HepG2 (cell line): ENCODE measurements at regions of chr15 and their contacts with region 1.

Region 1: DNA sequence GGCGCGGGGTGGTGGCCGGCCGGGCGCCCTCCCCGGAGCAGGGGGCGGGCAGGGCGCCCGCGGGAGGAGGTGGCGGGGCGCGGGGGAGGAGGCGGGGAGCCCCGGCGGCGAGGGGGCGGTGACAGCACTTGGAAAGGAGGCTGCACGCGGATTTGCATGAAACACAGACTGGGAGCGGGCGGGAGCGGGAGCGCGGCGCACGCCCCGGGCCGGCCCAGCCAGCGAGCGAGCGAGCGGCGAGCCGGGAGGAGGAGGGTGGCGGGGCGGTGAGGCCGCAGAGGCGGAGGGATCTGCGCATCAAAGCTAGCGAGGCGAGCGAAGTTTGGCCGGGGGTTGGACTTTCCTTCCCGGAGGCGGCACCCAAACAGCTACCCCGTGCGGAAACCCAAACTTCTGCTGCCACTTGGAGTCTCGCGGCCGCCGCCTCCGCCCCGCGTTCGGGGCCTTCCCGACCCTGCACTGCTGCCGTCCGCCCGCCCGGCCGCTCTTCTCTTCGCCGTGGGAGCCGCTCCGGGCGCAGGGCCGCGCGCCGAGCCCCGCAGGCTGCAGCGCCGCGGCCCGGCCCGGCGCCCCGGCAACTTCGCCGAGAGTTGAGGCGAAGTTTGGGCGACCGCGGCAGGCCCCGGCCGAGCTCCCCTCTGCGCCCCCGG is at the start of gene SMAD3:
- DNase-seq: peak; percentile 86
- ATAC-seq: peak; percentile 67
- H3K4me3 ChIP-seq: peak within 1 kb of the TSS; percentile 78 to 98 (median 92)
- H3K27ac ChIP-seq: peak within 1 kb of the TSS; percentile 94
- H3K4me1 ChIP-seq: peaks cover 64% of the 10 kb centered on the region
- H3K27me3 ChIP-seq: no peaks in the 10 kb centered on the region; a peak in 1 of 5 replicates
- CTCF ChIP-seq: no peak
- EP300 ChIP-seq: no peak; a peak in 1 of 4 replicates
- POLR2A ChIP-seq: peak; percentile 78 to 82
- RAD21 ChIP-seq: peak; percentile 61
- total RNA-seq, gene SMAD3: 8.6 and 10.0 TPM in 2 replicates

Region 2: GRCh38 chr15:67024314-67024997 is 41.1 kb before region 1 on chr15:
- CTCF ChIA-PET with region 1: no interaction called
- POLR2A ChIA-PET with region 1: interaction called, 18 read pairs
- in situ Hi-C with region 1: no loop called
- intact Hi-C with region 1: no loop called
- DNase-seq: peak; percentile 77
- ATAC-seq: peak; percentile 84
- H3K4me3 ChIP-seq: no peak overlapping the region
- H3K27ac ChIP-seq: peak overlapping the region; percentile 22
- H3K4me1 ChIP-seq: peaks cover 37% of the 10 kb centered on the region
- H3K27me3 ChIP-seq: no peaks in the 10 kb centered on the region
- CTCF ChIP-seq: no peak
- EP300 ChIP-seq: no peak
- POLR2A ChIP-seq: no peak
- RAD21 ChIP-seq: 0 out of 2 replicates have a peak, but pooled peaks have one; percentile 15

Region 3: GRCh38 chr15:67048281-67049279 is 17.0 kb before region 1 on chr15:
- CTCF ChIA-PET with region 1: no interaction called
- POLR2A ChIA-PET with region 1: interaction called, 248 read pairs
- in situ Hi-C with region 1: no loop called
- intact Hi-C with region 1: loop called (anchors 1 kb)
- DNase-seq: peak; percentile 97
- ATAC-seq: peak; percentile 91
- H3K4me3 ChIP-seq: peak overlapping the region; percentile 6 to 56 (median 36); a peak in 5 of 6 replicates
- H3K27ac ChIP-seq: peak overlapping the region; percentile 100
- H3K4me1 ChIP-seq: peaks cover 6% of the 10 kb centered on the region
- H3K27me3 ChIP-seq: no peaks in the 10 kb centered on the region
- CTCF ChIP-seq: no peak
- EP300 ChIP-seq: peak; percentile 77 to 86
- POLR2A ChIP-seq: peak in 1 of 2 experiments; percentile 88; a peak in 2 of 4 replicates
- RAD21 ChIP-seq: peak; percentile 23; the same call in 1 of the 2 replicates

Region 4: GRCh38 chr15:67097930-67098740 is 32.6 kb after region 1 on chr15:
- CTCF ChIA-PET with region 1: no interaction called
- POLR2A ChIA-PET with region 1: interaction called, 10 read pairs
- in situ Hi-C with region 1: no loop called
- intact Hi-C with region 1: no loop called
- DNase-seq: no peak
- ATAC-seq: peak; percentile 53
- H3K4me3 ChIP-seq: peak overlapping the region in 1 of 3 experiments; percentile 39; a peak in 1 of 6 replicates
- H3K27ac ChIP-seq: peak overlapping the region; percentile 78
- H3K4me1 ChIP-seq: peaks cover 66% of the 10 kb centered on the region
- H3K27me3 ChIP-seq: no peaks in the 10 kb centered on the region
- CTCF ChIP-seq: no peak
- EP300 ChIP-seq: no peak
- POLR2A ChIP-seq: no peak
- RAD21 ChIP-seq: no peak

Region 5: DNA sequence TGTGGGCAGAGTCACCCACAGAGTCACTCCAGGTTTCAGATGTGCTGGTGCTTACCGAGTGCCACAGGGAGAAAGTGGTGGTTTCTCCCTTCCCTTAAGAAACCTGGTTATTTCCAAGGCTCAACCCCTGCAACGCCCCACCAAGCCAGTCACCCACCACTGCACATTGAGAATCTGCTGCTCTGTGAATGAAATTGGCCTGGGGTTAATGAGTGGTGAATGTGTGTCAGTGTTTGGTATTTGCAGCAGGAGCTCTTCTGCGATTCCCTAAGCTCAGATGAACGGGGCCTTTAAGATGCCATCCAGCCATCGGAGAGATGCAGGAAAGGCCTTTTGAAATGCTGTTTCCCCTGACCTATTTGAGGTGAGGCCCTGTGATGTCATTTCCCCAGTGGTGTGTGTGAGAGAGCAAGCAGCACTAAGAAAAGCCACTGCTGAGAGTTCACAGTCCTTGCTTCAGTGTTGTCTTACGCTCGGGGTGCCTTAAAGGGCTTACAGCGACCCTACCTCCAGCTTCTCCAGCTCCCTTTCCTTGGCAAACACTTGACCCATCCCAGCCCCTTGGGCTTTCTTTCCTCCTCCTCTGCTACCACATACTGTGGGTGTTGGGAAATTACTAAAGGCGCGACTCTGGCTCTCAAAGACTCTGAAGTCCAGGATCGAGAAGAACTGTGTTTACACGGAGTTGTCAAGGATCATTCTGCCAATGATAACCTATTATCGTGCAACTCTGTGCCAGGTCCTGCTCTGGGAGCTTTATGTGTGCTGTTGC is 68.7 kb after region 1 on chr15:
- CTCF ChIA-PET with region 1: no interaction called
- POLR2A ChIA-PET with region 1: interaction called, 17 read pairs
- in situ Hi-C with region 1: loop called (anchors 5 kb)
- intact Hi-C with region 1: no loop called
- DNase-seq: no peak
- ATAC-seq: peak; percentile 55
- H3K4me3 ChIP-seq: peak overlapping the region in 1 of 3 experiments; percentile 18; a peak in 1 of 6 replicates
- H3K27ac ChIP-seq: peak overlapping the region; percentile 60
- H3K4me1 ChIP-seq: peaks cover 81% of the 10 kb centered on the region
- H3K27me3 ChIP-seq: no peaks in the 10 kb centered on the region
- CTCF ChIP-seq: no peak
- EP300 ChIP-seq: no peak
- POLR2A ChIP-seq: no peak
- RAD21 ChIP-seq: no peak

Region 6: DNA sequence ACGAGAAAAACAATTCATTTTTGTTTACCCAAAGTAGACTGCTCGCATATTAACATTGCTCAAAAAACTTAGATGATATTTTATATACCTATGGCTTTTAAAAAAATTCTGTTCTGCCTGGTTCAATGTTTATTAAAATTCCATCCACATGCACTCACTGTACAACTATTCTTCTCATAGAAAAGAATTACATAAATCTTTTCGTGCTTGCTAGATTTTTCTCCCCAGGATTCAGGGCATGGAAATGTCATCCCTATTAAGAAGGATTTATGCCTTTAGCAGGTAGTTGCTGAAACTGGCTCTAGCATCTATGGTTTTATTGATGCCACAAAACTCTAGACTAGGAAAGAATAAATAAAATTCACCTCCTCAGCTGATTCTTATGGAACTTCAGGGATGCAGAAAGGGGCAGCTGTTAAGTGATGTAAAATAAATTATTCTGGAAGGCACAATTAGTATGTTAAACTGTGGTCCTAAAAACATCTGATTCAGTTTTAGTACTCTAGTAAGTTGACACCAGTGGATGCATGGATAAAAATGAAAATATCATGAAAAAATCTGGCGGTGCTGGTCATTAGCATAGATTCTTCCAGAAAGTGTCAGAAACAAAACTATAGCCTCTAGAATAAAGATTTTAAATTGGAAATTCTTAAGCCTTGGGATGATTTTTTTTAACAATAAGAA is 147.3 kb after region 1 on chr15:
- CTCF ChIA-PET with region 1: no interaction called
- POLR2A ChIA-PET with region 1: no interaction called
- in situ Hi-C with region 1: no loop called
- intact Hi-C with region 1: no loop called
- DNase-seq: no peak
- ATAC-seq: no peak
- H3K4me3 ChIP-seq: no peak overlapping the region
- H3K27ac ChIP-seq: no peak overlapping the region
- H3K4me1 ChIP-seq: no peaks in the 10 kb centered on the region
- H3K27me3 ChIP-seq: no peaks in the 10 kb centered on the region
- CTCF ChIP-seq: no peak
- EP300 ChIP-seq: no peak
- POLR2A ChIP-seq: no peak
- RAD21 ChIP-seq: no peak

Region 7: GRCh38 chr15:67254238-67255175 is 188.9 kb after region 1 on chr15 and contains the starts of genes AAGAB and IQCH:
- CTCF ChIA-PET with region 1: no interaction called
- POLR2A ChIA-PET with region 1: interaction called, 4 read pairs
- in situ Hi-C with region 1: no loop called
- intact Hi-C with region 1: loop called (anchors 2 kb)
- DNase-seq: peak; percentile 88
- ATAC-seq: peak; percentile 98
- H3K4me3 ChIP-seq: peak within 1 kb of the TSS; percentile 88 to 98 (median 92)
- H3K27ac ChIP-seq: peak within 1 kb of the TSS; percentile 65
- H3K4me1 ChIP-seq: peaks cover 31% of the 10 kb centered on the region
- H3K27me3 ChIP-seq: no peaks in the 10 kb centered on the region; a peak in 1 of 5 replicates
- CTCF ChIP-seq: no peak
- EP300 ChIP-seq: no peak
- POLR2A ChIP-seq: peak; percentile 74 to 86
- RAD21 ChIP-seq: no peak
- total RNA-seq, gene AAGAB: 34.9 and 52.3 TPM in 2 replicates
- total RNA-seq, gene IQCH: 0.48 and 0.55 TPM in 2 replicates

Region 8: DNA sequence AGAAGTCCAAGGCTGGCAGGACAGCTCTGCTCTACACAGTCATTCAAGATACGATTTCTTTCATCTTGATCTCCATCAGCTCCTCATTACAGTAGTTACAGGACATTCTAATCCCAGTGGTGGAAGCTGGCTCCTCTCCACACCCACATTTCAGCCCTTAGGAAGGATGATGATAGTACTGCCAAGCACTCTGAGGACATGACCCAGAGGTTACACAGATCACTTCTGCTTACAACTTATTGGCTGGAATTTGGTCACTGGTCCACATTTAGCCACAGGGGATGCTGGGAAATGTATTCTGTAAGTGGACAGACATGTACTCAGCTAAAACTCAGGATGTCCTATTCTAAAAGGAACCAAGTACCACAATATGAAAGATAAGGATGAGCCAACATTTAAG is 266.1 kb after region 1 on chr15:
- CTCF ChIA-PET with region 1: no interaction called
- POLR2A ChIA-PET with region 1: no interaction called
- in situ Hi-C with region 1: no loop called
- intact Hi-C with region 1: no loop called
- DNase-seq: no peak
- ATAC-seq: no peak
- H3K4me3 ChIP-seq: no peak overlapping the region
- H3K27ac ChIP-seq: no peak overlapping the region
- H3K4me1 ChIP-seq: no peaks in the 10 kb centered on the region
- H3K27me3 ChIP-seq: 0 out of 5 replicates have a peak, but pooled peaks cover 0 to 5% of the 10 kb centered on the region in 2 experiments
- CTCF ChIP-seq: no peak
- EP300 ChIP-seq: no peak
- POLR2A ChIP-seq: no peak
- RAD21 ChIP-seq: no peak